Vagina (tissue), 2 donors: ENCODE measurements at regions of chr11 and their contacts with region 1.

Region 1: DNA sequence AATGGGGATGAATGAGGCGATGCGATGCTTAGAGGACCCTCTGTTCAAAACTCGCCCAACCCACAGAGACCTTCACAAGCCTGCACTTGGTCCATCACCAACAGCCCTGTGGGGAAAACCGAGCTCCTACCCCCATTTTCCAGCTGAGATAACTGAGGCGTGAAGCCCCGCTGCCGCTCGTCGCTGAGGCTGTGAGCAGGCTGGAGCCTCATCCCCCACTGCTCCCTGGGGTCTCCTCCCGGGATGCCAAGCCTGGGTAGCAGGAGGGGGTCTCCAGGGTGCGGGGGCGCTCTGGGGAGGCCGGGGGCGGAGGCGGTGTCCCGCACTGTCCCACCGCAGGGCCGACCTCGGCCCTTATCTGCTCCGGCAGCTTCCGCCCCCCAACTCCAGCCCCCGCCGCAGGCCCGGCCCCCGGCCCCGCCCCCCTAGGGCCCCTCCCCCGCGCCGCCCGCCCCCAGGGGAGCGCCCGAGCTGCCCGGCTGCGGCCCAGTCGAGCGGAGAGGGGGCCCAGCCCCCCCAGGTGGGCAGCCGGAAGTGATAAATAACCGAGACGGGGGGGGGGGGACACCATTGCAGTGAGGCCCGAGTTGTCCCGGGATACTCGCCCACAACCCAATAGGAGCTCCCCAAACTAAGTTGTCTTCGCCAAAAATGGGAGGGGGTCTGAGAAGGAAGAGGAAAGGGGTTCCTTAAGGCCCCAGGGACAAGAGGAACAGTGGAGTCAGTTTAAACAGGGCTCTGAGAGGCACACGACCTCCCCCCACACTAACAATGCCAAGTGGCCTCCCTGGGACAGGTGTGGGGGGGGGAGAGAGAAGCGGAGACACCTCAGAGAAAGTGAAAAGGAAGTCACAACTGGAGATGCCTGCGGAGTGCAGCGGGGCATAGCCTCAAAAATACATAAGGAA is 8.3 kb upstream of the SLC39A13 start:
- DNase-seq: no peak
- H3K4me3 ChIP-seq: peak overlapping the region; percentile 54 to 57
- H3K27ac ChIP-seq: peak overlapping the region; percentile 87
- H3K4me1 ChIP-seq: peaks cover 32% of the 10 kb centered on the region
- H3K27me3 ChIP-seq: no peaks in the 10 kb centered on the region
- CTCF ChIP-seq: no peak
- POLR2A ChIP-seq: peak in 1 of 2 donors; percentile 37

Region 2: GRCh38 chr11:47328404-47329390 is 71.4 kb before region 1 on chr11:
- intact Hi-C with region 1: loop called (anchors 2 kb)
- DNase-seq: peak in 1 of 2 donors; percentile 72
- H3K4me3 ChIP-seq: no peak overlapping the region
- H3K27ac ChIP-seq: no peak overlapping the region
- H3K4me1 ChIP-seq: peaks cover 13% of the 10 kb centered on the region
- H3K27me3 ChIP-seq: no peaks in the 10 kb centered on the region
- CTCF ChIP-seq: no peak
- POLR2A ChIP-seq: no peak